Ascending aorta (tissue), 2 donors: ENCODE measurements at regions of chr10 and their contacts with region 1.

Region 1: DNA sequence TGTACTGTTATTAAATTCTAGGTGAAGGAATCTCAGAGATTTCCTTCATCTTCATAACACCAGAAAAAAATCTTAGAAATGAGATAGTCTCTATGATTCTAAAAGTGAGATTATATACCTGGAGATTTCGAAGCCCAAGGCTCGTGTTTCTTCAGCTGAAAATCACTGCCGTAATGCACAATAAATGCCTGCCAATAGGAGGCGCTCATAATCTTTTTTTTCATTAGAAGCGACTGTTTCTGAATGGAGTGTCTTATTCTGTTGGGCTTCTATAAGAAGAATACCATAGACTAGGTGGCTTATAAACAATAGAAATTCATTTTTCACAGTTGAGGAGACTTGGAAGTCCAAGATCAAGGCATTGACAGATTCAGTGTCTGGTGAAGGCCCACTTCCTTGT is 294.7 kb downstream of the PRKG1 start:
- DNase-seq: no peak
- H3K4me3 ChIP-seq: no peak overlapping the region
- H3K27ac ChIP-seq: peak overlapping the region; percentile 44 to 73
- H3K4me1 ChIP-seq: peaks cover 3 to 20% of the 10 kb centered on the region in 2 donors
- H3K27me3 ChIP-seq: no peaks in the 10 kb centered on the region
- CTCF ChIP-seq: peak in 2 of 3 experiments; percentile 6 to 7

Region 2: GRCh38 chr10:51301644-51302043 is 67.3 kb before region 1 on chr10:
- intact Hi-C with region 1: loop called (anchors 5 kb)
- DNase-seq: peak in 1 of 2 donors; percentile 74
- H3K4me3 ChIP-seq: no peak overlapping the region
- H3K27ac ChIP-seq: peak overlapping the region; percentile 82 to 84
- H3K4me1 ChIP-seq: peaks cover 4 to 67% of the 10 kb centered on the region in 2 donors
- H3K27me3 ChIP-seq: no peaks in the 10 kb centered on the region
- CTCF ChIP-seq: no peak

Region 3: DNA sequence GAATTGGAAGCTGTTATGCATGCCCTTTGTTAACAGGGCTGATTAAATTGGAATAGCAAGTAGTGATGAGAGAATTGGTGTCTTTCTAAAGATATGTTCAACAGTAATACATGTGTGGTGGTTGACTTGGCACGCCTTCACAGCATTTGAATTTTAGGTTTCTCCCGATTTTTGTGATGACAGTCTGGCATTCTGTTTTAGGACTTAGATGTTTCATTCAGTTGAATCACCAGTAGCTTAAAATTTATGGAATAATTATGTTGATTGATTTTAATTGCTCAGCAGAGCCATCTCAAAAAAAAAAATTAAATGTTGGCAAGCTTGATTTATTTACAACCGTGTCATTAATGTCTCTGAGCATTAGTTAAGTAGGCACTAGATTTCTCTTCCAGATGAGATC is 110.8 kb after region 1 on chr10:
- intact Hi-C with region 1: no loop called
- DNase-seq: no peak
- H3K4me3 ChIP-seq: no peak overlapping the region
- H3K27ac ChIP-seq: no peak overlapping the region
- H3K4me1 ChIP-seq: peaks cover 0 to 6% of the 10 kb centered on the region in 2 donors
- H3K27me3 ChIP-seq: no peaks in the 10 kb centered on the region
- CTCF ChIP-seq: no peak